ENCODE measurements at regions of chr21 and their contacts with region 1.

Region 1: DNA sequence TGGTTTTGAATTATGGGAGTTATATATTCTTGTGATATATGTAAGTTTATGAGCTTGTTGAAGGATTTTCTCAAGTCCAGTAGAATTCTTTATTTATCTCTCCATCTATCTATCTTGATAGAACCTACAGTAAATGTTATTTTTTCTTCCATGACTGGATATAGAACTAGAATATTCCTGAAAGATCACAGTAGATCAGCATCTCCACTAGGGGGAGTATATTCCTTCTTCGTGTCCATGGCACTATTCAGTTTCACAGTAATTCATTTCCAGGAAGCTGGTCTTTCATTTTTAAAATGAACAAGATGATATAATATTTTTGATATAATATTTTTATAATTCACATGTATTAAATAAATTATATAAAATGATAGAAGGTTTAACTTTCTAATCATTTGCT is 18.8 kb downstream of the TMPRSS15 start:
- DNase-seq: peak; percentile 17
- H3K4me3 ChIP-seq: no peak overlapping the region
- H3K27ac ChIP-seq: no peak overlapping the region
- H3K4me1 ChIP-seq: no peaks in the 10 kb centered on the region
- H3K27me3 ChIP-seq: no peaks in the 10 kb centered on the region
- CTCF ChIP-seq: peak; percentile 66
- EP300 ChIP-seq: no peak
- RAD21 ChIP-seq: no peak

Region 2: GRCh38 chr21:18373606-18374005 is 11.2 kb before region 1 on chr21:
- CTCF ChIA-PET with region 1: interaction called, 17 read pairs
- POLR2A ChIA-PET with region 1: no interaction called
- DNase-seq: no peak
- H3K4me3 ChIP-seq: no peak overlapping the region
- H3K27ac ChIP-seq: no peak overlapping the region
- H3K4me1 ChIP-seq: no peaks in the 10 kb centered on the region
- H3K27me3 ChIP-seq: no peaks in the 10 kb centered on the region
- CTCF ChIP-seq: no peak
- EP300 ChIP-seq: no peak
- RAD21 ChIP-seq: no peak

Region 3: GRCh38 chr21:18398843-18399242 is 14.1 kb after region 1 on chr21:
- CTCF ChIA-PET with region 1: interaction called, 26 read pairs
- POLR2A ChIA-PET with region 1: no interaction called
- DNase-seq: no peak
- H3K4me3 ChIP-seq: no peak overlapping the region
- H3K27ac ChIP-seq: no peak overlapping the region
- H3K4me1 ChIP-seq: no peaks in the 10 kb centered on the region
- H3K27me3 ChIP-seq: no peaks in the 10 kb centered on the region
- CTCF ChIP-seq: no peak
- EP300 ChIP-seq: no peak
- RAD21 ChIP-seq: no peak

Measured in SK-N-SH (cell line).